Sigmoid colon (tissue), 7 donors: ENCODE measurements at regions of chr4 and their contacts with region 1.

Region 1: DNA sequence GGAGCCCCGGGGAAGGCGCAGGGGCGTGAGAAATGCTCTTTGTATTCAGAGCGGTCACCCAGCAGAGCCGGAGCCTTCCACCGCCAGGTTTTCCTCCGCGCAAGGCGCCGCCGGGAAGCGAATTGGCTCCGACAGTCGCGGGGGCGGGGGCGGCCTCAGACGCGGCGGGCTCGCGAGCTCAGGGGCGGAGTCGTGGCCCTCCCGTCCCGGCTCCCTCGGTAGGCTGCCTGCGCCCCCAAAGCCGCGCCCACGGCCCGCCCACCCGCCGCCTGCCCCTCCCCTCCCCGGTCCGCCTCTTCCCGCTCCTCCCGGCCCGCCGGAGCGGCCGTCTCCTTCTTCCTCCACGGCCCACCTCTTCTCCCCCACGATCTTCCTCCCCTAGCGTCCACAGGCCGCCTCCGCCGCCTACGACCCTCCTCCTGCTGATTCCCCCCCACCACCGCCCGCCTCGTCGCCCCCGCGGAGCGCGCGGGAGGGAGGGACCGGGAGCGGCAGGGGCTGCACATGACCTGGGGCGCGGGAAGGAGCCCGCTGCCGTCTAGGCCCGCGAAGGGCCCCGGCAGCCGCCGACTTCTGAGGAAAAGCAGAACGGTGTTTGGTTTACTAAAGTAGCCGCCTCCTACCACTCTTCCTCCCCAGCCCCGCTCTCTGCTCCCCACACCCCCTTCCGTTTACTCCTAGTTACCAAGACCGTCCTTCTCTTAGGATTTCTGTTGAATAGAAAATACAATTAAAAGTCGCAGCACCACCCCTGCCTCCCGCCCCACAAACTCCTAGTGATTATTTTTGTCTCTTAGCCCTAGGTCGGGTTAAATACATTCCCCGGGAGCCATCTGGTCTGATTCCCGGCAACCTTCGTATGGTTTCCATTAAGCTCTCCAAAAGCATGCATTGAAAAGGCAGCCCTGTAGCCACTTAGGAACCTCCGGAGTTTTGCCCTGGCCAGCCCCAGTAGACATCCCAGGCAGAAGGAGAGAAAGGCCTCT is 53.2 kb downstream of the C4orf51 start:
- DNase-seq: peak; percentile 98
- H3K4me3 ChIP-seq: peak overlapping the region; percentile 59 to 63 (median 62)
- H3K27ac ChIP-seq: peak overlapping the region; percentile 96 to 99 (median 97)
- H3K4me1 ChIP-seq: peaks cover 0 to 53% (median 47%) of the 10 kb centered on the region in 4 donors
- H3K27me3 ChIP-seq: no peaks in the 10 kb centered on the region
- CTCF ChIP-seq: no peak
- EP300 ChIP-seq: peak in 2 of 4 donors; percentile 31 to 55
- POLR2A ChIP-seq: peak; percentile 75 to 83

Region 2: GRCh38 chr4:144970597-144970996 is 762.6 kb before region 1 on chr4:
- intact Hi-C with region 1: no loop called
- DNase-seq: no peak
- H3K4me3 ChIP-seq: no peak overlapping the region
- H3K27ac ChIP-seq: no peak overlapping the region
- H3K4me1 ChIP-seq: no peaks in the 10 kb centered on the region
- H3K27me3 ChIP-seq: no peaks in the 10 kb centered on the region
- CTCF ChIP-seq: no peak
- EP300 ChIP-seq: no peak
- POLR2A ChIP-seq: no peak

Region 3: GRCh38 chr4:145180298-145181090 is 552.7 kb before region 1 on chr4 and contains the start of gene OTUD4:
- intact Hi-C with region 1: loop called (anchors 10 kb)
- DNase-seq: peak; percentile 98
- H3K4me3 ChIP-seq: peak within 1 kb of the TSS; percentile 85 to 98 (median 91)
- H3K27ac ChIP-seq: peak within 1 kb of the TSS; percentile 97 to 99 (median 98)
- H3K4me1 ChIP-seq: peaks cover 0 to 40% (median 32%) of the 10 kb centered on the region in 4 donors
- H3K27me3 ChIP-seq: no peaks in the 10 kb centered on the region
- CTCF ChIP-seq: no peak
- EP300 ChIP-seq: no peak
- POLR2A ChIP-seq: peak; percentile 61 to 67
- total RNA-seq, gene OTUD4: 27.7 to 31.7 (median 29.8) TPM

Region 4: GRCh38 chr4:145618932-145619638 is 114.1 kb before region 1 on chr4 and contains the start of gene MMAA:
- intact Hi-C with region 1: loop called (anchors 2 kb)
- DNase-seq: peak; percentile 97
- H3K4me3 ChIP-seq: peak within 1 kb of the TSS; percentile 71 to 89 (median 87)
- H3K27ac ChIP-seq: peak within 1 kb of the TSS; percentile 94 to 98 (median 96)
- H3K4me1 ChIP-seq: peaks cover 0 to 27% (median 12%) of the 10 kb centered on the region in 4 donors
- H3K27me3 ChIP-seq: no peaks in the 10 kb centered on the region
- CTCF ChIP-seq: peak; percentile 13 to 53 (median 48)
- EP300 ChIP-seq: peak in 1 of 4 donors; percentile 13
- POLR2A ChIP-seq: peak; percentile 94
- total RNA-seq, gene MMAA: 2.5 to 6.6 (median 2.7) TPM

Region 5: DNA sequence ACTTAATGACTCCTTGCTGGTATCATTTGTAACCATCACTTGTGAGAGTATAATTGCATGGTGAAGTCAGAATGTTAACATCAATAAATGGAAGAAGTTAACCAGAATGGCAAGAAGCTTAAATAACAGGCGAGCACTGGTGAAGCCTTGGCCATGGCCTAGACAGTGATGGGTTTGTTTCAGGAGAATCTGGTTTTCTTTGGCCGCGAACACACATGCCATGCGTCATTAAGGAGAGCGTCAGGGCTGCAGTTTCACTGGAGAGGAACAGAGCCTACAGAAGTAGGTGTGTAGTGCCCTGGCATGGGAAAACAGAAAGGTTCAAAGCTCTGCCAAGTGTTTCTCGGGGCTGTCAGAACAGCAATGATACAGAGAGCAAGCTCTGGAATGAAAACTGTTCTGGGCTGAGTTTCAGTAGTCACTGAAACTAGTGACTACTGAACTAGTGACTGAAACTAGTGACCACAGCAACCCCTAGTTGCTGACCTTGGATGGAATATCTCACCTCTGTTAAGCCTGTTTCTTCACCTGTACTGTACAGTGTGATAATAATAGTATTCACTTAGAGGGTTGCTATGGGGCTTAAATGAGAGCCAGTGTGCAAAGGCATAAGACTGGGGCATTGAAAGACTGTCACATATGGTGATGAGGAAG is 40.5 kb after region 1 on chr4:
- intact Hi-C with region 1: loop called (anchors 2 kb)
- DNase-seq: peak; percentile 90
- H3K4me3 ChIP-seq: no peak overlapping the region
- H3K27ac ChIP-seq: peak overlapping the region; percentile 53 to 83 (median 72)
- H3K4me1 ChIP-seq: peaks cover 0 to 20% (median 14%) of the 10 kb centered on the region in 4 donors
- H3K27me3 ChIP-seq: no peaks in the 10 kb centered on the region
- CTCF ChIP-seq: no peak
- EP300 ChIP-seq: peak in 3 of 4 donors; percentile 45 to 85 (median 59)
- POLR2A ChIP-seq: no peak

Region 6: GRCh38 chr4:145936142-145936996 is 203.2 kb after region 1 on chr4:
- intact Hi-C with region 1: loop called (anchors 1 kb)
- DNase-seq: peak; percentile 85
- H3K4me3 ChIP-seq: peak overlapping the region; percentile 80 to 91 (median 84)
- H3K27ac ChIP-seq: peak overlapping the region; percentile 92 to 98 (median 94)
- H3K4me1 ChIP-seq: peaks cover 0 to 36% (median 19%) of the 10 kb centered on the region in 4 donors
- H3K27me3 ChIP-seq: no peaks in the 10 kb centered on the region
- CTCF ChIP-seq: peak in 3 of 4 experiments; percentile 18 to 28 (median 25)
- EP300 ChIP-seq: no peak
- POLR2A ChIP-seq: no peak

Region 7: DNA sequence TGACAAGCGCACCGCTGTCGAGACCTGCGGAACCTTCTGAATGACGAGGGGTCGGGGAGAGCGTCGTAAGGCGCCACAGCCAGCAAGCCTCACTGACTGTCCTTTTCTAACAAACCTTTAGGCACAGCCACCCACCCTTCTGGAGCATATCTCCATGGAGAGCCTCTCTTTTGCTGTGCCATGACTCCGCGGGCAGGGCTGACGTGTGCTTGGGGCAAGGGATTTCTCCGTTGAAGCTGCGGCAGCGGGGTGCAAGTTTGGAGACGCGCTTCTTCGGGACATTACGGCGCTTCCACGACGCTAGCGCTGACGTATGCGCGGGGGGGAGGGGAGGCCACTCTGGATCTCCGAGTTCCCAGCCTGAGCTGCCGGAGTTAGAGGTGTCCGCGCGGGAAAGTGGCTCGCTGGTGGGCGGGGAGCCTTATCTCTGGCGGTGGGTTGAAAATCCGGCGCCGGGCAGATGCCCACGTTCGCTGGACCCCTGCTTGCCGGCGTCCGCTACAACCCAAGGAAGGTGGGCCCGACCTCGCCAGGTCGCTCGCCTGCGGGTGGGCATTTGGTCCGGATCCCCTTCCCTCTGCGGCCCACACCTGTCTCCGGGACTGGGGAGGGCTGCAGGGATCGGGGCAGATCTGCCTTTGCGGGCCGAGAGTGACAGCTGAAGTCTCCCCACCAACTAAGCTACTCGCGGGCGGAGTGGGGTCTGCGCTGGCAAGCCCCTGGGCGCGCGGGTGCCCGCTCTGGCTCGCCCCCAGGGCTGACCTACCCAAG is 789.1 kb after region 1 on chr4:
- intact Hi-C with region 1: loop called (anchors 10 kb)
- DNase-seq: peak; percentile 96
- H3K4me3 ChIP-seq: peak overlapping the region; percentile 64 to 90 (median 78)
- H3K27ac ChIP-seq: peak overlapping the region; percentile 75 to 85 (median 81)
- H3K4me1 ChIP-seq: peaks cover 0 to 25% (median 16%) of the 10 kb centered on the region in 4 donors
- H3K27me3 ChIP-seq: no peaks in the 10 kb centered on the region
- CTCF ChIP-seq: no peak
- EP300 ChIP-seq: peak in 2 of 4 donors; percentile 23 to 67
- POLR2A ChIP-seq: peak; percentile 25 to 48